Naive thymus-derived CD4-positive, alpha-beta T cell (primary cell): ENCODE measurements at regions of chr4 and their contacts with region 1.

Region 1: GRCh38 chr4:151117371-151117962 is 18.0 kb downstream of the RPS3A start:
- DNase-seq: peak in 8 of 9 donors; percentile 22 to 63 (median 54)
- ATAC-seq: peak; percentile 86
- H3K4me3 ChIP-seq: no peak overlapping the region
- H3K4me3 Mint-ChIP-seq: no peak overlapping the region
- H3K27ac ChIP-seq: no peak overlapping the region
- H3K27ac Mint-ChIP-seq: peak overlapping the region in 1 of 9 donors; percentile 59
- H3K4me1 ChIP-seq: no peaks in the 10 kb centered on the region
- H3K4me1 Mint-ChIP-seq: peaks cover 0 to 8% (median 6%) of the 10 kb centered on the region in 7 donors
- H3K27me3 ChIP-seq: no peaks in the 10 kb centered on the region
- H3K27me3 Mint-ChIP-seq: no peaks in the 10 kb centered on the region

Region 2: DNA sequence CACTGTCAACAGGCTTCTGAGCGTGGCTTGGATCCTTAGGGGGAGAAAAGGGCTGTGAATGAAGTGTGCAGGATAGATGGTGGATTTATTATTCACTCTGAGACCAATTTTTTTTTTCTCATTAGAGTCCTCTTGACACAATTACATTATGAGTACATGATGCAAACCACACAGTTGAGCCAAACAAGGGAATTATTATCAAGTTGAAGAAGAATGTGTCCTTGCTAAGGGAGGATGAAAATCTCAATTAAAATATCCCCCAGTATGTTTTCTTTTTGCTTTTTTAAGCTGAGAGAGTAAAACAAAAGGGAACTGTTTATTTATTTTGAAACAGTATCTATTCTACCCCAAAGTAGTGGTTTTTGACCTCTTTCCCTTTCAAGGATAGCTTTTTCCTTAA is 22.3 kb after region 1 on chr4:
- CTCF ChIA-PET with region 1: no interaction called
- POLR2A ChIA-PET with region 1: no interaction called
- intact Hi-C with region 1: no loop called
- DNase-seq: no peak
- ATAC-seq: no peak
- H3K4me3 ChIP-seq: no peak overlapping the region
- H3K4me3 Mint-ChIP-seq: no peak overlapping the region
- H3K27ac ChIP-seq: no peak overlapping the region
- H3K27ac Mint-ChIP-seq: no peak overlapping the region
- H3K4me1 ChIP-seq: no peaks in the 10 kb centered on the region
- H3K4me1 Mint-ChIP-seq: peaks cover 0 to 1% (median 0%) of the 10 kb centered on the region in 7 donors
- H3K27me3 ChIP-seq: no peaks in the 10 kb centered on the region
- H3K27me3 Mint-ChIP-seq: no peaks in the 10 kb centered on the region

Region 3: DNA sequence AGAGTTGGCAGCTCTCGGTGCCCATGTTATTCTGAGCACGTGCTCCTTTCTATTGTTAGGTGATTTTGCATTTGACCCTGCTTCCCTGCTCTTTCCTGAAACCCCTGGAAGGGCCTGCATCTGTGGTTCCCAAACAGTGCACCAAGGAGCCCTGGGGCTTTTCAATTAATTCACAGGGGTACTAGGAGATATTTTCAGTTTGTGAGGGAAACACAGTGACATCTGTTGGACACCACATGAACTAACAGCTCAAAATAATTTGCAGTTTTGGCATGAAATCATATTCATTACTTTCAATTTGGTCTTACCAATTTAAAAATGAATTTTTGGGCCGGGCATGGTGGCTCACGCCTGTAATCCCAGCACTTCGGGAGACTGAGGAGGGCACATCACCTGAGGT is 486.8 kb after region 1 on chr4:
- CTCF ChIA-PET with region 1: no interaction called
- POLR2A ChIA-PET with region 1: no interaction called
- intact Hi-C with region 1: loop called in 1 of 2 experiments (anchors 1 kb)
- DNase-seq: no peak
- ATAC-seq: no peak
- H3K4me3 ChIP-seq: no peak overlapping the region
- H3K4me3 Mint-ChIP-seq: no peak overlapping the region
- H3K27ac ChIP-seq: no peak overlapping the region
- H3K27ac Mint-ChIP-seq: no peak overlapping the region
- H3K4me1 ChIP-seq: no peaks in the 10 kb centered on the region
- H3K4me1 Mint-ChIP-seq: peaks cover 0 to 4% (median 0%) of the 10 kb centered on the region in 7 donors
- H3K27me3 ChIP-seq: no peaks in the 10 kb centered on the region
- H3K27me3 Mint-ChIP-seq: peaks cover 0 to 1% (median 0%) of the 10 kb centered on the region in 5 donors